CD8-positive, alpha-beta memory T cell (primary cell): ENCODE measurements at regions of chr20 and their contacts with region 1.

Region 1: DNA sequence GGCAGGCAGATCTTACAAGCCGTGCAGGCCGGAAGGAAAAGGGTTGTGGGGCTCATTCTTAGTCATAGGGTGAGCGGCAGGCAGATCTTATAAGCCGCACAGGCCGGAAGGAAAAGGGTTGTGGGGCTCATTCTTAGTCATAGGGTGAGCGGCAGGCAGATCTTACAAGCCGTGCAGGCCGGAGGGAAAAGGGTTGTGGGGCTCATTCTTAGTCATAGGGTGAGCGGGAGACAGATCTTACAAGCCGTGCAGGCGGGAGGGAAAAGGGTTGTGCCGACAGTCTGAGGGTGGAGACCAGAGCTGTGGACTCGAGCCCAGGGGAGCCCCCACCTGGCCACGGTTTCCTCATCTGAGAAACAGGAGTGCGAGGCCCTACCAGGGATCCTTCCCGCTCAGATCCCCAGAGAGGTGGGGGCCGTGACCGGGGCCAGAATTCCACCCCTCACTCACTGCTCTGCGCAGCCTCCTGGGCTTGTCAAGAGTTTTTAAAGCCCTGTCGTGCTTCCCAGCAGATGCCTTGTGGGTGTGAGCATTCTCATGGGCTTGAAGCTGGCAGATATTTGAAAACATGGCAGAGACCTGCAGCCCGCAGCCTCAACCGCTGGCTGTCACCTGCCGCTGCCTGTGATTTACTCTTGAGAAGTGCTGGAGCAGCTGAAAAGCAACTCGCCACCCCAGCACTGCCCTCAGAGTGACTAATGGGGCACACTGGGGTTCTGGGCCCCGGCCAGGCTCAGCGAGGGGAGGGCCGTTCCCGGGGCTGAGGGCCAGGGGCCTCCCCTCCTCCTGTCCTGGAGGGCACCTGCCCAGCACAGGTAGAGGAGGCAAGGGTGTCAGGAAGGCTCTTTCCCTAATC is 31.9 kb downstream of the NTSR1 start:
- DNase-seq: peak; percentile 68 to 91 (median 70)
- H3K4me3 ChIP-seq: peak overlapping the region; percentile 76
- H3K4me3 Mint-ChIP-seq: peak overlapping the region; percentile 78 to 93 (median 82)
- H3K27ac ChIP-seq: peak overlapping the region; percentile 81
- H3K27ac Mint-ChIP-seq: peak overlapping the region; percentile 68 to 99 (median 92)
- H3K4me1 ChIP-seq: peaks cover 55% of the 10 kb centered on the region
- H3K4me1 Mint-ChIP-seq: peaks cover 40 to 53% (median 43%) of the 10 kb centered on the region in 3 donors
- H3K27me3 ChIP-seq: no peaks in the 10 kb centered on the region
- H3K27me3 Mint-ChIP-seq: no peaks in the 10 kb centered on the region

Region 2: GRCh38 chr20:62529896-62530642 is 210.4 kb before region 1 on chr20:
- CTCF ChIA-PET with region 1: no interaction called
- POLR2A ChIA-PET with region 1: no interaction called
- DNase-seq: no peak
- H3K4me3 ChIP-seq: no peak overlapping the region
- H3K4me3 Mint-ChIP-seq: no peak overlapping the region
- H3K27ac ChIP-seq: peak overlapping the region; percentile 64
- H3K27ac Mint-ChIP-seq: no peak overlapping the region
- H3K4me1 ChIP-seq: no peaks in the 10 kb centered on the region
- H3K4me1 Mint-ChIP-seq: no peaks in the 10 kb centered on the region
- H3K27me3 ChIP-seq: no peaks in the 10 kb centered on the region
- H3K27me3 Mint-ChIP-seq: peaks cover 12 to 26% of the 10 kb centered on the region in 2 donors

Region 3: GRCh38 chr20:62716198-62716940 is 24.1 kb before region 1 on chr20:
- CTCF ChIA-PET with region 1: interaction called, 3 read pairs
- POLR2A ChIA-PET with region 1: interaction called, 11 read pairs
- DNase-seq: peak; percentile 11 to 71 (median 29)
- H3K4me3 ChIP-seq: peak overlapping the region; percentile 23
- H3K4me3 Mint-ChIP-seq: peak overlapping the region in 6 of 7 donors; percentile 59 to 87 (median 78)
- H3K27ac ChIP-seq: no peak overlapping the region
- H3K27ac Mint-ChIP-seq: peak overlapping the region; percentile 11 to 95 (median 90)
- H3K4me1 ChIP-seq: peaks cover 20% of the 10 kb centered on the region
- H3K4me1 Mint-ChIP-seq: peaks cover 23 to 28% (median 25%) of the 10 kb centered on the region in 3 donors
- H3K27me3 ChIP-seq: no peaks in the 10 kb centered on the region
- H3K27me3 Mint-ChIP-seq: peaks cover 3 to 10% of the 10 kb centered on the region in 2 donors

Region 4: GRCh38 chr20:62760856-62761758 is 20.6 kb after region 1 on chr20:
- CTCF ChIA-PET with region 1: no interaction called
- POLR2A ChIA-PET with region 1: no interaction called
- DNase-seq: no peak
- H3K4me3 ChIP-seq: no peak overlapping the region
- H3K4me3 Mint-ChIP-seq: no peak overlapping the region
- H3K27ac ChIP-seq: no peak overlapping the region
- H3K27ac Mint-ChIP-seq: no peak overlapping the region
- H3K4me1 ChIP-seq: no peaks in the 10 kb centered on the region
- H3K4me1 Mint-ChIP-seq: no peaks in the 10 kb centered on the region
- H3K27me3 ChIP-seq: no peaks in the 10 kb centered on the region
- H3K27me3 Mint-ChIP-seq: peaks cover 11 to 19% of the 10 kb centered on the region in 2 donors